ENCODE measurements at regions of chr7 and their contacts with region 1.

Region 1: GRCh38 chr7:54326592-54327167 is 215.5 kb upstream of the VSTM2A start:
- DNase-seq: no peak
- ATAC-seq: no peak
- H3K4me3 ChIP-seq: no peak overlapping the region
- H3K4me1 ChIP-seq: no peaks in the 10 kb centered on the region
- CTCF ChIP-seq: no peak

Region 2: GRCh38 chr7:54242776-54243175 is 83.9 kb before region 1 on chr7:
- intact Hi-C with region 1: loop called in 1 of 2 experiments (anchors 10 kb)
- DNase-seq: no peak
- ATAC-seq: no peak
- H3K4me3 ChIP-seq: no peak overlapping the region
- H3K4me1 ChIP-seq: no peaks in the 10 kb centered on the region
- CTCF ChIP-seq: no peak

Region 3: GRCh38 chr7:54538122-54538521 is 211.4 kb after region 1 on chr7:
- intact Hi-C with region 1: no loop called
- DNase-seq: no peak
- ATAC-seq: no peak
- H3K4me3 ChIP-seq: no peak overlapping the region
- H3K4me1 ChIP-seq: no peaks in the 10 kb centered on the region
- CTCF ChIP-seq: no peak